Ovary (tissue), 10 donors: ENCODE measurements at regions of chr3 and their contacts with region 1.

Region 1: DNA sequence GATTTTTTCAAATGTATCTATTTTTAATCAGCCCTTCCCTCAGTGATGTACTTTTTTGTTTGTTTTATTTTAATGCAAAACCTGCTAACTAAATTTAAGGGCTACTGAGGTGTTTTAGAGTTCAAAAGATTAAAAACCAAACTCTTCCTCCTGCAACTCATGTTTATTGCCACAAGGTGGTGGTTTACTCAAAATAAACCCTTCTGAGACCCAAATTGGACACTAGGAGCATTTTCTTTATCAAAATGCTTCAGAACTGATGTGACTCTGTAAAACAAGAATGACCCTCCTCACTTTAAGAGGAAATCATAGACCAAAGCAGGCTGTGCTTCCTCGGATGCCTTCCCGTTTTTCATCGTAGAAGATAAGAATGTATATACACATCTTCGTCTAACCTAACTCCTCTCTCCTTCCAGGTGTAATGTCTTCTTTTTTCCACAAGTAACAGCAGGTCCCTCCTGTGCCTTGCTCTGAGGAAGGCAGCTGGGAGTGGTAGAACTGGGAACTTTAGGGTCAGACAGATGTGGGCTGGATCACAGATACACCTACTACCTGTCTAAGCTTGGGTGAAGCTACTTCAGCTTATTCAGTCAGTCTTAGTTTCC is 2.9 kb upstream of the NME9 start:
- DNase-seq: no peak
- H3K4me3 ChIP-seq: no peak overlapping the region
- H3K27ac ChIP-seq: no peak overlapping the region
- H3K4me1 ChIP-seq: no peaks in the 10 kb centered on the region
- H3K27me3 ChIP-seq: no peaks in the 10 kb centered on the region
- CTCF ChIP-seq: peak; percentile 35 to 75 (median 74)
- EP300 ChIP-seq: no peak
- POLR2A ChIP-seq: no peak

Region 2: DNA sequence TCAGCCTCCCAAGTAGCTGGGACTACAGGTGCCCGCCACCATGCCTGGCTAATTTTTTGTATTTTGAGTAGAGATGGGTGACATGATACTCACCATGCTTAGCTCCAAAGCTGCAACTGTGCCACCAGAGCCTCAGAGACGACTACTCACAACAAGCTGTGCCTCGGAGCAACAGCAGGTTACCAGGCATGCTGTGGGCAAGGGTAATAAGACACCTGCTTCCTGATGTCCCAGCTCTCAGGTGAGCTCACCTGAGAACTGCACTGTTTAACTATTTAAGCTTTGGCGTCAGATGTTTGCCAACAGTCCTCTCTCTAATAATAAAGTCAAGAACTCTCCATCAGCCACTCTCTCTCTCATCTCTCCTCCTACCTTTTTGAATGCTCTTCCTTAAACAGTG is 224.5 kb before region 1 on chr3:
- intact Hi-C with region 1: no loop called
- DNase-seq: no peak
- H3K4me3 ChIP-seq: no peak overlapping the region
- H3K27ac ChIP-seq: no peak overlapping the region
- H3K4me1 ChIP-seq: no peaks in the 10 kb centered on the region
- H3K27me3 ChIP-seq: no peaks in the 10 kb centered on the region
- CTCF ChIP-seq: no peak
- EP300 ChIP-seq: no peak
- POLR2A ChIP-seq: no peak

Region 3: DNA sequence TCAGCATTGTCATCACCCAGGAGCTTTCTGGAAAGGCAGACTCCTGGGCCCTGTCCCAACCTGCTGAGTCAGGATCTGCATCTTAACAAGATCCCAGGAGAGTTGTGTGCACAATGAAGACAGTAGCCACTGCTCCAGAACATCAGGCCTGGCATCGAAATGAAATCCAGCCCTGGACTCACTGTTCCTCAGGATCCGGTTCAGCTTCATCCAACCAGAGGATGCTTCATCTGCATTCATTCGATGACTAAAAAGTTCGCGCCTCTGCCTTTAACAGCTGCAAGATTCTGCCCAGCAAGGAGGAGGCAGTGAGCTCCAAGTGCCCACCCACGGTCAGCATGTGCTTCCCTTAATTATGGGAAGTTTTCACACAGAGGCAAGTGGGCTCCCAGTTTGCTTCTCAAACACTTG is 76.2 kb after region 1 on chr3:
- intact Hi-C with region 1: loop called in 2 of 4 experiments (anchors 5 kb)
- DNase-seq: no peak
- H3K4me3 ChIP-seq: no peak overlapping the region
- H3K27ac ChIP-seq: no peak overlapping the region
- H3K4me1 ChIP-seq: no peaks in the 10 kb centered on the region
- H3K27me3 ChIP-seq: no peaks in the 10 kb centered on the region
- CTCF ChIP-seq: no peak
- EP300 ChIP-seq: no peak
- POLR2A ChIP-seq: no peak

Region 4: GRCh38 chr3:138417559-138417982 is 85.0 kb after region 1 on chr3:
- intact Hi-C with region 1: loop called in 3 of 4 experiments (anchors 5 kb)
- DNase-seq: peak; percentile 78 to 85 (median 82)
- H3K4me3 ChIP-seq: no peak overlapping the region
- H3K27ac ChIP-seq: no peak overlapping the region
- H3K4me1 ChIP-seq: no peaks in the 10 kb centered on the region
- H3K27me3 ChIP-seq: no peaks in the 10 kb centered on the region
- CTCF ChIP-seq: peak; percentile 70 to 77 (median 76)
- EP300 ChIP-seq: no peak
- POLR2A ChIP-seq: no peak

Region 5: GRCh38 chr3:138442433-138442832 is 109.9 kb after region 1 on chr3:
- intact Hi-C with region 1: no loop called
- DNase-seq: no peak
- H3K4me3 ChIP-seq: no peak overlapping the region
- H3K27ac ChIP-seq: no peak overlapping the region
- H3K4me1 ChIP-seq: no peaks in the 10 kb centered on the region
- H3K27me3 ChIP-seq: no peaks in the 10 kb centered on the region
- CTCF ChIP-seq: no peak
- EP300 ChIP-seq: no peak
- POLR2A ChIP-seq: no peak